ENCODE measurements at regions of chr15 and their contacts with region 1.

Region 1: GRCh38 chr15:35697549-35698299 is 151.8 kb upstream of the DPH6 start:
- DNase-seq: no peak
- H3K4me3 ChIP-seq: no peak overlapping the region
- H3K27ac ChIP-seq: peak overlapping the region; percentile 69
- H3K4me1 ChIP-seq: peaks cover 23% of the 10 kb centered on the region
- H3K27me3 ChIP-seq: no peaks in the 10 kb centered on the region
- CTCF ChIP-seq: peak; percentile 2 to 40

Region 2: DNA sequence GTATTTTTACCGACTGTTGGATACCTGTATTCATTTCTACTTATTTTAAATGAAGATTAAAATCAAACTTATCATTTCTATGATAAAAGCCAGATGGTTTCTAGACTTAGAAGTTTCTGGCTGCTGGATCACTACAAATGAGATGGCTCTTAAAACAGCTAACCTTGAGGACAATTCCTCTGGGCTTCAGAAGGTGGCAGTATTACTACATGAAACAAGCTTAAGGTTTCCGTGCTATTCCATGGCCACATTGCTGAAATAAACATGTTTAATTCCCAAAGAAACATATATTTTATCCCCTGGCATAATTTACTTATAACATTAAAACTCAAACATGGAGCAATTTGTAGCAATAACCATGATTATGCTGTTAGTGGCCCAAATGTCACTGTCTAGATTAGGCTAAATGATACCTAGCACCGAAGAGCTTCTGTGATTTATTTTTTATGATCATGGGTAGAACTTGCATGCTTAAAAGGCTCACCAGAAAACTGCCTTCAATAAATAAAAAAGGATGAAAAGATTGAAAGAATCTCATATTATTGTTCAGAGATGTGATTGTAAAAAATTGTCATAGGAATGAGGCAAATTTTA is 408.6 kb before region 1 on chr15:
- CTCF ChIA-PET with region 1: no interaction called
- dilution Hi-C with region 1: no loop called
- in situ Hi-C with region 1: no loop called
- intact Hi-C with region 1: loop called (anchors 5 kb)
- DNase-seq: peak; percentile 34
- H3K4me3 ChIP-seq: no peak overlapping the region
- H3K27ac ChIP-seq: no peak overlapping the region
- H3K4me1 ChIP-seq: peaks cover 12% of the 10 kb centered on the region
- H3K27me3 ChIP-seq: no peaks in the 10 kb centered on the region
- CTCF ChIP-seq: peak; percentile 84 to 88

Region 3: GRCh38 chr15:35545824-35546510 is 151.8 kb before region 1 on chr15 and contains the start of gene DPH6:
- CTCF ChIA-PET with region 1: no interaction called
- dilution Hi-C with region 1: no loop called
- in situ Hi-C with region 1: no loop called
- intact Hi-C with region 1: loop called (anchors 10 kb)
- DNase-seq: peak; percentile 84
- H3K4me3 ChIP-seq: peak within 1 kb of the TSS; percentile 71 to 96 (median 71)
- H3K27ac ChIP-seq: peak within 1 kb of the TSS; percentile 88
- H3K4me1 ChIP-seq: peaks cover 3% of the 10 kb centered on the region
- H3K27me3 ChIP-seq: no peaks in the 10 kb centered on the region
- CTCF ChIP-seq: no peak
- total RNA-seq, gene DPH6: 16.3 to 17.0 TPM

Region 4: DNA sequence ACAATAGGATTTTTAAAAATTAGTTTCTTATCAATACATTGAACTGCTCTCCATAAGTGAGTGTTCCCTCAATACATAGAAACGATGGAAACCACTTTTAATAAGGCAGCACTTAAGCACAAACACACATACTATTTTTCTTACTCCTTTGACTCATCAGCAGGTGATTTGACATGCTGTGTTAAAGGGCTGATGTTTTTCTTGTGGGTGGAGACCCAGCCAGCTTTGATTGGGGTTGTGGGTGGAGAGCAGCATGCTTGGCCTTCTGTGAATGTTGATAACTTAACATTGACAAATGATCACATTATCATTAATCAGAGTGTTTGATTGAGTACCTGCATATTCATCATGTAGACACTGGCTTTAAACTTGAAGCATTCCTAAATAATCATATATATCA is 71.2 kb after region 1 on chr15:
- CTCF ChIA-PET with region 1: no interaction called
- dilution Hi-C with region 1: no loop called
- in situ Hi-C with region 1: no loop called
- intact Hi-C with region 1: no loop called
- DNase-seq: peak; percentile 44
- H3K4me3 ChIP-seq: no peak overlapping the region
- H3K27ac ChIP-seq: no peak overlapping the region
- H3K4me1 ChIP-seq: no peaks in the 10 kb centered on the region
- H3K27me3 ChIP-seq: no peaks in the 10 kb centered on the region
- CTCF ChIP-seq: no peak

Region 5: DNA sequence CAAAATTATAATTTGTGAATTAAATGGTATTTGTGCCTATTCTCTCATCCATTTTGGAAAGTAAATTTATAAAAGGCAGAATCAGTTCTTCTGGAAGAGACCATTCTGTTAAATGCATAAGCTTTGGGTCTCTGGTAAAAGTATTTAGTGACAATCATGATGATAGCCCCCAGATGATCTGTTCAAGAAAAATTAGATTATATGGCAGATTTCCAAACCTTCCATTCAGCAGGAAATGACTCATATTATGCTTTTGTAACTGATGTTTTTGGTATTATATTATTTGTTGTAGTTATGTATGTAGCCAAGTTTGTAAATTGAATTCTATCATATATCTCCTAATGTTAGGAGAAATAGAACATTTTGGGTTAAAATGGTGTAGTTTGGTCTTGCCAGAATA is 189.0 kb after region 1 on chr15:
- CTCF ChIA-PET with region 1: no interaction called
- dilution Hi-C with region 1: no loop called
- in situ Hi-C with region 1: no loop called
- intact Hi-C with region 1: loop called (anchors 10 kb)
- DNase-seq: peak; percentile 26
- H3K4me3 ChIP-seq: no peak overlapping the region
- H3K27ac ChIP-seq: no peak overlapping the region
- H3K4me1 ChIP-seq: peaks cover 21% of the 10 kb centered on the region
- H3K27me3 ChIP-seq: no peaks in the 10 kb centered on the region
- CTCF ChIP-seq: no peak

Region 6: GRCh38 chr15:35912196-35912595 is 214.5 kb after region 1 on chr15:
- CTCF ChIA-PET with region 1: no interaction called
- dilution Hi-C with region 1: no loop called
- in situ Hi-C with region 1: no loop called
- intact Hi-C with region 1: loop called (anchors 10 kb)
- DNase-seq: peak; percentile 5
- H3K4me3 ChIP-seq: no peak overlapping the region
- H3K27ac ChIP-seq: no peak overlapping the region
- H3K4me1 ChIP-seq: no peaks in the 10 kb centered on the region
- H3K27me3 ChIP-seq: no peaks in the 10 kb centered on the region
- CTCF ChIP-seq: peak in 1 of 2 donors; percentile 55

Region 7: GRCh38 chr15:36501063-36501678 is 803.4 kb after region 1 on chr15:
- CTCF ChIA-PET with region 1: no interaction called
- dilution Hi-C with region 1: no loop called
- in situ Hi-C with region 1: no loop called
- intact Hi-C with region 1: loop called (anchors 1 kb)
- DNase-seq: peak; percentile 63
- H3K4me3 ChIP-seq: no peak overlapping the region
- H3K27ac ChIP-seq: no peak overlapping the region
- H3K4me1 ChIP-seq: no peaks in the 10 kb centered on the region
- H3K27me3 ChIP-seq: no peaks in the 10 kb centered on the region
- CTCF ChIP-seq: peak; percentile 73 to 95